Tibial artery (tissue), 4 donors: ENCODE measurements at regions of chr1 and their contacts with region 1.

Region 1: GRCh38 chr1:33472349-33472980 is at the start of gene ZSCAN20:
- DNase-seq: peak; percentile 97 to 99
- H3K4me3 ChIP-seq: peak within 1 kb of the TSS; percentile 58 to 74
- H3K27ac ChIP-seq: peak within 1 kb of the TSS; percentile 77 to 90
- H3K4me1 ChIP-seq: peaks cover 0 to 33% (median 27%) of the 10 kb centered on the region in 4 donors
- H3K27me3 ChIP-seq: no peaks in the 10 kb centered on the region
- CTCF ChIP-seq: no peak

Region 2: GRCh38 chr1:33430692-33431593 is 41.5 kb before region 1 on chr1 and contains the start of gene PHC2:
- intact Hi-C with region 1: loop called (anchors 5 kb)
- DNase-seq: peak; percentile 98
- H3K4me3 ChIP-seq: peak within 1 kb of the TSS; percentile 70 to 72
- H3K27ac ChIP-seq: peak within 1 kb of the TSS; percentile 69 to 75
- H3K4me1 ChIP-seq: peaks cover 0 to 17% (median 7%) of the 10 kb centered on the region in 4 donors
- H3K27me3 ChIP-seq: no peaks in the 10 kb centered on the region
- CTCF ChIP-seq: peak; percentile 20 to 21